ENCODE measurements at regions of chr5 and their contacts with region 1.

Region 1: GRCh38 chr5:40798012-40798855 is at the start of gene PRKAA1:
- DNase-seq: peak; percentile 88 to 93 (median 91)
- H3K4me3 ChIP-seq: peak within 1 kb of the TSS; percentile 71 to 91
- H3K4me3 Mint-ChIP-seq: peak within 1 kb of the TSS; percentile 91 to 97 (median 94)
- H3K27ac ChIP-seq: peak within 1 kb of the TSS; percentile 91
- H3K27ac Mint-ChIP-seq: peak within 1 kb of the TSS; percentile 91 to 98 (median 95)
- H3K4me1 ChIP-seq: peaks cover 34% of the 10 kb centered on the region
- H3K4me1 Mint-ChIP-seq: peaks cover 27 to 52% (median 42%) of the 10 kb centered on the region in 4 donors
- H3K27me3 ChIP-seq: no peaks in the 10 kb centered on the region
- H3K27me3 Mint-ChIP-seq: no peaks in the 10 kb centered on the region
- total RNA-seq, gene PRKAA1: 113 to 120 TPM

Region 2: DNA sequence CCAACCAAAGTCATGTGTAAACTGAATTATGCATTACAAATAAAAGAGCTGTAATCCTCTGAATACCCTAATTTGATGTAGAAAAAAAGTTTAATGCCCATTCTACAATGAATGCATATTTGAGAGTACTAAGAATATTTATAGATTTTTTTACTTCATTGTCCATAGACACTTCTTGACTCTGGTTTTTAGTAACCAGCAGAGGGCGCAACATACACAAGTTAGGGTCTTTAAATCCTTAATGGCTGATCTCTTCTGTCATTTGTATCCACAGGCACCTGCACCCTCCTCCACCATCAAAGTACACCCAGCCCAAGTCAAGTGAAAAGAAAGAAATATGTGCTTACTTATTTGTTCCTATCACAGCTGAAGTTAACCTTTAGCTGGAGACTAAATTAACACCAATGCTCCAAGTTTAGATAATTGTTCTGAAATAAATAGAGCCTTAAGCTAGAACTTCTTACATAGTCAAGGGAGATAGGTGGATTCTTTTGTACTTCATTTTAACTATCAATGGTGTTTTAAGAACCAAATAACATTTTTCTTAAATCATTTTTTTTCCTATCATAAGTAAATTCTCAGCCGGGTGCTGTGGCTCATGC is 849.3 kb before region 1 on chr5:
- CTCF ChIA-PET with region 1: no interaction called
- POLR2A ChIA-PET with region 1: no interaction called
- intact Hi-C with region 1: loop called (anchors 1 kb)
- DNase-seq: peak; percentile 64 to 69 (median 66)
- H3K4me3 ChIP-seq: no peak overlapping the region
- H3K4me3 Mint-ChIP-seq: no peak overlapping the region
- H3K27ac ChIP-seq: no peak overlapping the region
- H3K27ac Mint-ChIP-seq: no peak overlapping the region
- H3K4me1 ChIP-seq: no peaks in the 10 kb centered on the region
- H3K4me1 Mint-ChIP-seq: peaks cover 0 to 5% (median 2%) of the 10 kb centered on the region in 4 donors
- H3K27me3 ChIP-seq: no peaks in the 10 kb centered on the region
- H3K27me3 Mint-ChIP-seq: no peaks in the 10 kb centered on the region

Region 3: DNA sequence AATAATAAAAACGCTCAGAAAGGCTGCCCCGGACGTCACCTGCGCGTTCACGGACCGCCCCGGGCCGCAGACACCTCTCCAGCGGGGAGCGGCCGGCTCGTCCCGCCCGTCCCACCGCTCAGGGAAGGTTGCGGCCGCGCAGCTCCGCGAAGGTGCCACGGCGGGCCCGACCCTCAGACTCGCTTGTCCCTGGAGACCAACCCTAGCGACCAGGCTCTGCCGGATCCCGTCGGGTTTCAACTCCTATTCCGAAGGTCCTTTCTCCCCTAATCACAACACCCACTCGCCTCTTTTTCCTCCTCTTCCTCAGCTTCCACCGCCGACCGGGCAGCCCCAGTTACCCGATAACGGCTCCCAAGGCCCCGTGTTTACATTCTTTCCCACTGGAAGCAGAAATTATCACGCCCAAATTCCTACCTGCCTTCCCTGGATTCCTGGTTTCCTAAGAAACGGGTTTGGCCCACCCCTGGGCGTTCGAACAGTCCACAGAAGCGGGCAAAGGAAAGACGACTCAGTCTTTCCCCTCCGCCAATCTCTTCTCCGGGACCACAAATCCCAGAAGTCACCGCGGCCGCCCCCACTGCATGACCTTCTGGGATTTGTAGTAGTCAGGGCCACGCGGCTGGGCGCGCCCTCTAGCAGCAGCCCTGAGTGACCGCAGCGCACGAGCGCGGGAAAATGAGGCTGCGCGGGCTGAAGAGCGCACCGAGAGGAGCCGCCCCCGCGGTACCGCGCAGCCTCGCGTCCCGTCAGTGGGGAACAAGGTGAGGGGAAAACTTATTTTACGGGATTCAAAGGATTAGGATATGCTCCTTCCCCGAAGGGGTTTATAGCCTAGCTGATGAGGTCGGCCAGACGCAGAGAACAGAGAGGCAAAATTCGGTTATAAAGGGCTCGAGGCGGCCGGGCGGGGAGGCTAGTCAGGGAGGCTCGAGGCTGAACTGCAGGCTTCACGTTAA is 42.5 kb before region 1 on chr5 and contains the start of gene TTC33:
- CTCF ChIA-PET with region 1: interaction called, 11 read pairs
- POLR2A ChIA-PET with region 1: no interaction called
- intact Hi-C with region 1: loop called (anchors 1 kb)
- DNase-seq: peak; percentile 90 to 97 (median 92)
- H3K4me3 ChIP-seq: peak within 1 kb of the TSS; percentile 93 to 95
- H3K4me3 Mint-ChIP-seq: no peak within 1 kb of the TSS
- H3K27ac ChIP-seq: peak within 1 kb of the TSS; percentile 90
- H3K27ac Mint-ChIP-seq: peak within 1 kb of the TSS in 1 of 7 donors; percentile 68
- H3K4me1 ChIP-seq: peaks cover 21% of the 10 kb centered on the region
- H3K4me1 Mint-ChIP-seq: peaks cover 8 to 29% (median 16%) of the 10 kb centered on the region in 4 donors
- H3K27me3 ChIP-seq: no peaks in the 10 kb centered on the region
- H3K27me3 Mint-ChIP-seq: no peaks in the 10 kb centered on the region
- total RNA-seq, gene TTC33: 15.2 to 16.2 TPM

Region 4: GRCh38 chr5:40774623-40775022 is 23.6 kb before region 1 on chr5:
- CTCF ChIA-PET with region 1: interaction called, 4 read pairs
- POLR2A ChIA-PET with region 1: interaction called, 6 read pairs
- intact Hi-C with region 1: loop called (anchors 2 kb)
- DNase-seq: no peak
- H3K4me3 ChIP-seq: no peak overlapping the region
- H3K4me3 Mint-ChIP-seq: no peak overlapping the region
- H3K27ac ChIP-seq: no peak overlapping the region
- H3K27ac Mint-ChIP-seq: peak overlapping the region in 2 of 7 donors; percentile 1 to 13
- H3K4me1 ChIP-seq: no peaks in the 10 kb centered on the region
- H3K4me1 Mint-ChIP-seq: peaks cover 6 to 18% (median 13%) of the 10 kb centered on the region in 4 donors
- H3K27me3 ChIP-seq: no peaks in the 10 kb centered on the region
- H3K27me3 Mint-ChIP-seq: no peaks in the 10 kb centered on the region

Region 5: DNA sequence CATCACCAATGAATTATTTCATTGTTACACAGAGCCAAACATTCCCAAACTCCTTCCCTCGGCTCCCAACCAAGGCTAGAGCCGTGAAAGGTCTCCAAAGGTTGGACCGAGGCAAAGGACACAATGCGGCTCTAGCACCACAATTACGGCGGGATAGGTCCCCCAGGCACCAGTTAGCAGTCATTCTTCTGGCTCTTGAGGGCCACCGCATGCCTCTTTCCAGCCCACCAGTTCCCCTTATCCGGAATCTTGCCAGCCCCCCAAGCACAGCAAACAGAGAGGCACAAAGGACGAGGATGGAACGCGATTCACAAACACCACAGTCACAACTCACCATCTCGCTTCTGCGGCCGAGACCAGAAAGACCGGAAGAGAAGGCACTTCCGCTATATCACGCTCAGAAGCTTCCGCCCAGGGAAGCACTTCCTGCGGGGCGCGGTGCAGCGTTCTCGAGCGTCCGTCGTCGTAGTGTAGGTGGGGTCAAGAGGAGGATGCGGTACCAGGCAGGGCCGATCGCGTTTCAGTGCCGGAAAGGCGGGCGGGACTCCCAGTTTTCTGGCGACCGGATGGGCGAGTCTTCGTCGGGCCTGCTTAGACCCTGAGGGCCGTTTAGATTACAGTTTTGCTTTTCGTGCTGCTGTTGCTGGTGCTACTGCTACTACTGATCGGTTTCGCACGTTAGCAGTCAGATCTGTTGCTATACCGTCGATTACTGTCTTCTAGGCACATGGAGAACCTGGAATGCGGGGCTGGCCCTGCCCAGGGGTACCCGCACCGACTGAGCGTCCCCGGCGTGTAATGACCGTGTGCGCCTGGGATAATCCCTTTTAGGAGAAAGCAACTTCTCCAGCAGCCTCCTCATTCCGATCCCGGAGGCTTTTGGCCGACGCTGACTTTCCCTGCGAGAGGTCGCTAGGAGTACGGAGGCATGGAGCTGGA is 36.9 kb after region 1 on chr5 and contains the start of gene RPL37:
- CTCF ChIA-PET with region 1: interaction called, 3 read pairs
- POLR2A ChIA-PET with region 1: interaction called, 30 read pairs
- intact Hi-C with region 1: loop called (anchors 1 kb)
- DNase-seq: peak; percentile 88 to 91 (median 90)
- H3K4me3 ChIP-seq: peak within 1 kb of the TSS; percentile 71 to 99
- H3K4me3 Mint-ChIP-seq: peak within 1 kb of the TSS; percentile 97 to 100 (median 98)
- H3K27ac ChIP-seq: peak within 1 kb of the TSS; percentile 92
- H3K27ac Mint-ChIP-seq: peak within 1 kb of the TSS; percentile 94 to 100 (median 99)
- H3K4me1 ChIP-seq: peaks cover 41% of the 10 kb centered on the region
- H3K4me1 Mint-ChIP-seq: peaks cover 20 to 68% (median 47%) of the 10 kb centered on the region in 4 donors
- H3K27me3 ChIP-seq: no peaks in the 10 kb centered on the region
- H3K27me3 Mint-ChIP-seq: no peaks in the 10 kb centered on the region
- total RNA-seq, gene RPL37: 2,354 to 2,406 TPM